ENCODE measurements at regions of chr11 and their contacts with region 1.

Region 1: DNA sequence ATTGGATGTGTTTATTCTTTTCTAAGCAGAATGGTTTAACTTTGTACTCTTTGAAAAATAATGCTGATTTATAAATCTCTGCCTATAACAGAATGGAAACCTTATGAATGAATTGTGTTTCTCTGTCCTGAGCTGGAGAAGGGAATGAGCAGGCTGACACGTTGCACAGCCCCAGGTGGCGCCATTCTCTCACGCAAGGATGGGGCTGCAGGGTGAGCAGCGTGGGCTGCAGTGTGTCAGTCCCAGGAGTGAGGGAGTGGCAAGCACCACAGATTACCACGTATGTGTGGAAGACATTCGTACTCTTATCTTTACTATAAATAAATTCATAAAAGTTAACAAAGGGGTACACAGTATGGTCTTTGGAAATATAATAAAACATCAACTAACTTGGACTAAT is 33.4 kb downstream of the FDX1 start:
- DNase-seq: no peak
- ATAC-seq: peak; percentile 96
- H3K4me3 ChIP-seq: no peak overlapping the region
- H3K27ac ChIP-seq: no peak overlapping the region
- H3K4me1 ChIP-seq: no peaks in the 10 kb centered on the region
- H3K27me3 ChIP-seq: no peaks in the 10 kb centered on the region
- CTCF ChIP-seq: peak; percentile 74

Region 2: DNA sequence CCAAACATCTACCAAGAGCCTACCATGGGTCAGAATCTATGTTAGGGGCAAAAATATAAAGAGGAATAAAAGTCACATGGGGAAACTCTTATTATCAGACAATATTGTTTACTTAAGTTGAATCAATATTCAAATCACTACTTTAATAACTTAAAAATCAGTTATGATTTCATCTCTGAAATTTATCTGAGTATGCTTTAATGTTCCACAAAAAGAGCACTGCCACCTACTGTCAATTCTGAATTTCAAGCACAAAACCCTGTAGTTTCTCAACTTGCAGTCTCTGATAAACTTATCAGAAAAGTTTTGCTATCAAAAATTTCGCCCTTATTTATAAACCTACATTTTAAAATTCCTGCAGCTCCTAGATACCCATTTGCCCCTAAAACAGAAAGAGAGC is 214.1 kb before region 1 on chr11:
- CTCF ChIA-PET with region 1: no interaction called
- POLR2A ChIA-PET with region 1: no interaction called
- in situ Hi-C with region 1: no loop called
- intact Hi-C with region 1: no loop called
- DNase-seq: no peak
- ATAC-seq: no peak
- H3K4me3 ChIP-seq: no peak overlapping the region
- H3K27ac ChIP-seq: no peak overlapping the region
- H3K4me1 ChIP-seq: peaks cover 8% of the 10 kb centered on the region
- H3K27me3 ChIP-seq: no peaks in the 10 kb centered on the region
- CTCF ChIP-seq: peak; percentile 56; the same call in 1 of the 2 replicates

Region 3: DNA sequence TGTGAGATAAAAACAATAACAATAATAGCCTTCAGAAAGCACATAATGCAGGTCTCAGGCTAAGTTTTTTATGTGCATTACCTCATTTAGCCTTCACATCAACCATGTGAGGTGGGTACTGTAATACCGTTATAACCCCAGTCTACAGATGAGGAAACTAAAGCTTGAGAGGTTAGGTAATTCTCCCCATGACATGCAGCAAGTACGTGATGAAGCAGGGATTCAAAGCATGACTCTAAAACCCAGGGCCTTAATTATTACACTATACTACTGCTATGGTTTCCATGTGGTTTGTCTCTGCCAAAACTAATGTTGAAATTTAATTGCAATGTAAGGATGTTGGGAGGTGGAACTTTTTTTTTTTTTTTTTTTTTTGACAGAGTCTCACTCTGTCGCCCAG is 71.1 kb before region 1 on chr11:
- CTCF ChIA-PET with region 1: no interaction called
- POLR2A ChIA-PET with region 1: no interaction called
- in situ Hi-C with region 1: no loop called
- intact Hi-C with region 1: no loop called
- DNase-seq: no peak
- ATAC-seq: no peak
- H3K4me3 ChIP-seq: no peak overlapping the region
- H3K27ac ChIP-seq: no peak overlapping the region
- H3K4me1 ChIP-seq: no peaks in the 10 kb centered on the region
- H3K27me3 ChIP-seq: no peaks in the 10 kb centered on the region
- CTCF ChIP-seq: no peak

Region 4: DNA sequence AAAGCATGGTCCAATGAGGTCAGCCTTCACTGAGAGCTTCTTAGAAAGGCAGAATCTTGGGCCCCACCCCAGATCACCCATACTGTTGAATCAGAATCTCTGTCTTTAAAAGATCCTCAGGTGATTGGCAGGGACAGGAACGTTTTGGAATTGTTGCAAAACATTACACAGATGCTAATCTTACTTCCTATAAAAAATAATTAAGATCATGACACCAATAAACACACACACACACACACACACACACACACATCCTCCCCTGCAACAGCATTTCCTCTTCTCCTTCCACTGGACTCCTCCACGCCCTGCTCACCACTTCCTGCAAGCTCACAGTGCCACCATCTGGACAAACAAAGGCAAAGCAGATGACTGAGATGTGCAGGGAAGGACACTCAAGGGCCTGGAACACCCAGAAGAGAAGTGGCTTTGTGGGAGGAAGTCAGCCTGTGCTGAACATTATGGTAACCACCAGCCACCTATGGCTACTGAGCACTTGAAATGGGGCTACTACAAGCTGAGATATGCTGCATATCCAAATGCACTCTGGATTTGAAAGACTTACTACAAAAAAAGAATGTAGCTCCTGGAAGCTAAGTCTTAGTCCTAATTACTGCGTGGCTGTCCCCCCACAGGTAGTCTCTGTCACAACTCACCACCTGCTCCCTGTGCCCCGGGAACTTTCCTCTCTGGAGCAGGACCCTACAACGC is 983.4 kb after region 1 on chr11:
- CTCF ChIA-PET with region 1: no interaction called
- POLR2A ChIA-PET with region 1: no interaction called
- in situ Hi-C with region 1: no loop called
- intact Hi-C with region 1: loop called (anchors 10 kb)
- DNase-seq: peak; percentile 77
- ATAC-seq: peak; percentile 97
- H3K4me3 ChIP-seq: no peak overlapping the region
- H3K27ac ChIP-seq: no peak overlapping the region
- H3K4me1 ChIP-seq: no peaks in the 10 kb centered on the region
- H3K27me3 ChIP-seq: 0 out of 2 replicates have a peak, but pooled peaks cover 3% of the 10 kb centered on the region
- CTCF ChIP-seq: peak; percentile 93